ENCODE measurements at regions of chr16 and their contacts with region 1.

Region 1: GRCh38 chr16:50585331-50585776 is 37.2 kb downstream of the NKD1 start:
- DNase-seq: no peak
- ATAC-seq: no peak
- H3K4me3 Mint-ChIP-seq: no peak overlapping the region
- H3K27ac Mint-ChIP-seq: no peak overlapping the region
- H3K4me1 Mint-ChIP-seq: peaks cover 30% of the 10 kb centered on the region
- H3K27me3 Mint-ChIP-seq: no peaks in the 10 kb centered on the region
- CTCF ChIP-seq: no peak

Region 2: DNA sequence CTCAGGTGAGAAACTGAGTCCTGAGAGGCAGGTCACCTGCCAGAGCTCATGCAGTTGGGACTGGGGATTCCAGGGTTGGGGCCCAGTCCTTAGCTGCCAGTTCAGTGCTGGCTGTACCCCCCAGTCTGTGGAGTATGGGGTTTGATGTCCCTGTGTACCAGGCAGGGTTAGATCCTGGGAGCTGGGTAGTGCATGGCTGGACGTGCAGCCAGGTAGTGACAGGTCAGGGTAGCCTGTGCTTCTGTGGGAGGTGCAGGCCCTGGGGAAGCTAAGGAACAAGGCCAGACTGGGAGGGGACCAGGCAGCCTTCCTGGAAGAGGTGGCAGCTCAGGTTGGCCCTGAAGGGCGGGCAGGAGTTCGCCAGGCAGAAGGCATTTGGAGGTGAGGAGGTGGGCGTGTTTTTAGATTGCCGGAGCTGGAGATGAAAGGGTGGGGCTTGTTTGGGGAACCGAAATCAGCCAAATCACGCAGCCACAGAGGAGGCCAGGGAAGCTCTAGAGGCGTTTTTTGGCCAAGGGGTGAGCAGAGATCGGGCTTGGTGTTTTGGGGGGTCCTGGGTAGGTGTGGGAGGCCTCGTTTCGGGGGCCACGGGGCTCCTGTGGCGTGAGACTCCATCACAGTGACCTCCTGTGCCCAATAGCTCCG is 311.6 kb before region 1 on chr16:
- CTCF ChIA-PET with region 1: no interaction called
- POLR2A ChIA-PET with region 1: interaction called, 13 read pairs
- intact Hi-C with region 1: no loop called
- DNase-seq: no peak
- ATAC-seq: peak; percentile 82
- H3K4me3 Mint-ChIP-seq: peak overlapping the region; percentile 99
- H3K27ac Mint-ChIP-seq: peak overlapping the region; percentile 100
- H3K4me1 Mint-ChIP-seq: peaks cover 92% of the 10 kb centered on the region
- H3K27me3 Mint-ChIP-seq: no peaks in the 10 kb centered on the region
- CTCF ChIP-seq: no peak

Region 3: GRCh38 chr16:50616883-50617645 is 31.7 kb after region 1 on chr16:
- CTCF ChIA-PET with region 1: no interaction called
- POLR2A ChIA-PET with region 1: no interaction called
- intact Hi-C with region 1: no loop called
- DNase-seq: no peak
- ATAC-seq: no peak
- H3K4me3 Mint-ChIP-seq: no peak overlapping the region
- H3K27ac Mint-ChIP-seq: no peak overlapping the region
- H3K4me1 Mint-ChIP-seq: no peaks in the 10 kb centered on the region
- H3K27me3 Mint-ChIP-seq: peaks cover 9% of the 10 kb centered on the region
- CTCF ChIP-seq: no peak

Region 4: DNA sequence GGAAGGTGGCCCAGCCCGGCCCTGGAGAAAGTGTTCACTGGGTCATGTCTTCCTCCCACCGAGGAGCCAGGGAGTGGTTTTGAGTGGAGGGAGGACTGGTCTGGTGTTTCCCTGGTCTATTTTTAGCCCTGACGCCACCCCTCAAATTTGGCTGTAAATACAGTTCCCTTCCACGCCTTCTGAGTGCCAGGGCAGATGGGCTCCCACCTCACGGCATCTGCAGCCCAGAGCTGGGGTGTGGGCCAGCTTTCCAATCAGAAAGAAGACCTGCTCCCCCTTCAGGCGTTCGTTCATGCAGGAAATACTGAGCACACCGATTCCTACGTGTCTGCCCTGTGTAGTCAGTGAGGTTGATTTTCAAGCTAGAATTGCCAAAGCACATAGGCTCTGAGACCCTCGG is 42.1 kb after region 1 on chr16:
- CTCF ChIA-PET with region 1: interaction called, 5 read pairs
- POLR2A ChIA-PET with region 1: no interaction called
- intact Hi-C with region 1: loop called (anchors 5 kb)
- DNase-seq: no peak
- ATAC-seq: peak; percentile 62
- H3K4me3 Mint-ChIP-seq: peak overlapping the region; percentile 35
- H3K27ac Mint-ChIP-seq: no peak overlapping the region
- H3K4me1 Mint-ChIP-seq: peaks cover 10% of the 10 kb centered on the region
- H3K27me3 Mint-ChIP-seq: no peaks in the 10 kb centered on the region
- CTCF ChIP-seq: no peak

Region 5: DNA sequence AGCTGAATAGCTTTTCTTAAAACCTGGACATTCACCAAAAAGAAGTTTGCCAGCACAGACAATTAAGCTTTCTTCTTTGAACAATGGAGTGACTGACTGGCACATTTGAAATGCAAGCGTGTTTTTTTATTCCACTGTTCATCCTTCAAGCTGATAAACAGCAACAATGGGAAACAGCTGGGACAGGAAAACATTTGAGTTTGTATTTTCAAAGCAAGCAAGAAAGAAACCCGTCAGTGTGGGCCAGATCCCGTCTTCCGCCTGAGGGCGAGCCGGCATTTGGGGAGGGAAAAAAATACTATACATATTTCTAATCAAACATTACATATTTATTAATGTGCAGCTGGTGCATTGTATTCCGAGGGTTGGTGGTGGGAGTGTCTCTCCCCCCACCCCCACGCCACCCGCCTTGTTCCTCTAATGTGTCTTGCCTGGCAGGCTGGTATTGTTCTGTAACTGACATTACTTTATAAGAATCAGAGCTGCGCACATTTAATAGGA is 250.8 kb after region 1 on chr16:
- CTCF ChIA-PET with region 1: no interaction called
- POLR2A ChIA-PET with region 1: no interaction called
- intact Hi-C with region 1: no loop called
- DNase-seq: no peak
- ATAC-seq: no peak
- H3K4me3 Mint-ChIP-seq: no peak overlapping the region
- H3K27ac Mint-ChIP-seq: no peak overlapping the region
- H3K4me1 Mint-ChIP-seq: peaks cover 8% of the 10 kb centered on the region
- H3K27me3 Mint-ChIP-seq: peaks cover 30% of the 10 kb centered on the region
- CTCF ChIP-seq: no peak